ENCODE measurements at regions of chr2 and their contacts with region 1.

Region 1: GRCh38 chr2:168948621-168949212 is 47.6 kb downstream of the G6PC2 start:
- DNase-seq: no peak
- H3K4me3 ChIP-seq: no peak overlapping the region
- H3K27ac ChIP-seq: no peak overlapping the region
- H3K4me1 ChIP-seq: no peaks in the 10 kb centered on the region
- H3K27me3 ChIP-seq: no peaks in the 10 kb centered on the region
- CTCF ChIP-seq: peak; percentile 16 to 64 (median 44); a peak in 3 of 4 replicates
- EP300 ChIP-seq: no peak
- POLR2A ChIP-seq: no peak
- RAD21 ChIP-seq: peak; percentile 44 to 52

Region 2: DNA sequence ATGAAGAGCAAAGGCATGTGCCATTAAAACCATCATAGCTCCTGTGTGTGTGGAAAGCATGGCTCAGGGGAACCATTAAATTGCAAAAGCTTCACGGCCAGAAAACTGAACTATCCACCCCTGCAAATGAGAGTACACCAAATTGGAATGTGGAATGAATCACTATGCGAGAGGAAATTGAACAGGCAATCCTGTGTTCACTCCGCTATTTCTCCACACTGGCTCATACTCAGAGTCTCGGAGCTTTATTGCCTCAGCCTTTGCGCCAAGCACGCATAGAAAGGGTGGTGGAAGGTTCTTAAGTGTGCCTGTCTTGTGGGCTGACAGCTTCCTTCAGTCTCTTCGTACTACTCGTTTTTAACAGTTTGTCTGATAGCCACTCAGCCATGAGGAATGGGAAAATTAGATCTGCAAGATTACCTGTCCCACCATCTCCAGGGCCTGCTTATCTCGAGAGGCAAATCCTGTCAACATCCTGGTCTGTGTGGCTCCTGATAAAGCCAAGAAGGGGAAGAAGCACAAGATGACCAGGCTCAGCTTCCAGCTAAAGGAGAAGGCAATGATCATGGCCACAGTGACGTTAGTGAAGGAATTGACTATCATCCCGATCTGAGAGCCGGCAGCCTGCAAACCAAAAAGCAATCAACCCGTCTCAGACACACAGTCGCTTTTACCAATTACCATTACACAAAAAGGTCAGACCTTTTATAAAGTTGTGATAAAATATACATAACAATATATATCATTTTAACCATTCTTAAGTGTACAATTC is 12.7 kb before region 1 on chr2:
- CTCF ChIA-PET with region 1: interaction called, 32 read pairs
- POLR2A ChIA-PET with region 1: no interaction called
- DNase-seq: no peak
- H3K4me3 ChIP-seq: no peak overlapping the region
- H3K27ac ChIP-seq: no peak overlapping the region
- H3K4me1 ChIP-seq: no peaks in the 10 kb centered on the region
- H3K27me3 ChIP-seq: no peaks in the 10 kb centered on the region
- CTCF ChIP-seq: no peak
- EP300 ChIP-seq: no peak
- POLR2A ChIP-seq: no peak
- RAD21 ChIP-seq: no peak

Region 3: DNA sequence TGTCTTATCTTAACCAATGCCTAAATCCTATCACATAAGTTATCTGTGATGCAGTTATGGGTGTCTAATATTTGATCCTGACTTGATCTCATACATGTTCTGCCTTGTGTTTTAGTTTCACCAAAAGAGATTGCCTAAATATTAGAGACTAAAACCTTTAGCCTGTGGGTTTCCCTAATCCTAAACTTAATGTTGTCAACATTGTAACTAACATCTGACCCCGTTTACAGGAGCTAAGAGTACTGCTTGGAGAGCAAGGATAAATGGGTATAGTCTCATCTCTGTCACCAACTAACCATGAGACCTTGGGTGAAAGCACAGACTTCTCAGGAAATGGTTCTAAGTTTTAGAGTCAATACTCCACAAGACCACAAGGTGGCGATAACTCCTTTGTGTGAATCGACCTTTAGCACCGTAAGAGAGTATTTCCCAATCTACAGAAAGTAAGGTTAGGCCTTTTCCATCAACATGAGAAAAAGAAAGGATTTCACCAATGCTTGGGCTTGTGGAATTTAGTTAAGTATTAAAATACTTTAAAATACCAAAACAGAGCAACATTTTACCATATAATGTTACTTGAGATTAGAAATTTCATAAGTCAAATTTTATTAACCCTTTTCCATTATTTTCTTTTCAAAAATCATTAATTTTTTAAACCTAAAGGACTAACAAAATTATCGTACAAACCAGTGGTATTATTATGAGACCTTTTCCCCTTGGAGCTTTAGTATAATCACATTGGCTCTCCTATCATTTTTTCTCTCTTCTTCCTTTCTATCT is 12.9 kb after region 1 on chr2:
- CTCF ChIA-PET with region 1: interaction called, 48 read pairs
- POLR2A ChIA-PET with region 1: no interaction called
- DNase-seq: peak in 1 of 2 experiments; percentile 13
- H3K4me3 ChIP-seq: no peak overlapping the region
- H3K27ac ChIP-seq: no peak overlapping the region
- H3K4me1 ChIP-seq: no peaks in the 10 kb centered on the region
- H3K27me3 ChIP-seq: no peaks in the 10 kb centered on the region
- CTCF ChIP-seq: peak in 2 of 3 experiments; percentile 73 to 85; a peak in 3 of 4 replicates
- EP300 ChIP-seq: no peak
- POLR2A ChIP-seq: no peak
- RAD21 ChIP-seq: peak; percentile 89 to 92

Measured in H1 (cell line).